Activated T-helper 2 cell treated with anti-CD3 and anti-CD28 coated beads, Interferon-gamma antibody, Interleukin-2, Interleukin-4, amounts not matched to agents 10 μg/mL and 5 μg/mL and 100 μg/mL, durations not matched to agents 14 hours and 24 hours and 36 hours (primary cell): ENCODE measurements at regions of chr1 and their contacts with region 1.

Region 1: DNA sequence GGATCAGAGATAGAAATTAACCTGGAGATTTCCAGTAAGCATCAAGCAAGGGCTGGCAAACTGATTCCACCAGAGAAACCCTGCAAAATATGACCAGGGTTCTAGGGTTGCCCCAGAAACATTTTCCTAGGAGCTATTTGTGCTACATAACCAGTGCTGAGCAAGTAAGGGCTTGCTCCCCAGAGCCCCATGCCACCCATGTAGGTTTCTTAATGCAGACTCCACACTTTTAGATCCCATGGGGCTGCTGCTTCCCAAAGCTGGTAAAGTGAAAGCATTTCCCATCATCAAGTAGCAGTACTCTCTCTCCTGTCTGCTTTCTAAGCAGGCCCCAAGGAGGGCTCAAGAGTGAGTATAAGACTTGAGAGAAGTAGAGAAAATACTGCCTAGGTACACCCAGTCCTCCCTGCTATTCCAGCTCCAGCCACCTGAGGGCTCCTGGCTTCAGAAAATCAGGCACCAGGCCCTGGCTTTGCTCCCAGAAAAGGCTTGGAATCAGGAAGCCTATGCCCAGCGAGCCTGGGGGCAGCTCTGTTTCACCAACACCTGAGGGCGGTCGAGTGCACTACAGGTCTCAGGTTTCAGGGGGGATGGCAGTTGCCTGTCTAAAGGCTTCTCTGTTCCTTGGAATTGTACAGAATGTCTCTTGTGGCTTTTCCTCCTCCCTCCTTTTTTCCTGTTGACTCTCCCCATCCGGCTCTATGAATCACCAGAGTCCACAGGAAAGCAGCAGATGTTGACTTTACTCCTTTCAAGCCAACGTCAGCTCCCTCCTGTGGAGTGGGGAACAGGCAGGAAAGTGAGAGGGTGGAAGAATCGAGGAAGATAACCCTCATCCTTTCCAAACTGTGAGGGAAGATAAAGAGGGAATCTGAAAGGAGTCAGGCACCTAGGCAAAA is 6.2 kb upstream of the ANKRD35 start:
- DNase-seq: peak; percentile 22
- H3K4me3 Mint-ChIP-seq: no peak overlapping the region
- H3K27ac Mint-ChIP-seq: no peak overlapping the region
- H3K4me1 Mint-ChIP-seq: peaks cover under 1% of the 10 kb centered on the region
- H3K27me3 Mint-ChIP-seq: peaks cover 2% of the 10 kb centered on the region

Region 2: DNA sequence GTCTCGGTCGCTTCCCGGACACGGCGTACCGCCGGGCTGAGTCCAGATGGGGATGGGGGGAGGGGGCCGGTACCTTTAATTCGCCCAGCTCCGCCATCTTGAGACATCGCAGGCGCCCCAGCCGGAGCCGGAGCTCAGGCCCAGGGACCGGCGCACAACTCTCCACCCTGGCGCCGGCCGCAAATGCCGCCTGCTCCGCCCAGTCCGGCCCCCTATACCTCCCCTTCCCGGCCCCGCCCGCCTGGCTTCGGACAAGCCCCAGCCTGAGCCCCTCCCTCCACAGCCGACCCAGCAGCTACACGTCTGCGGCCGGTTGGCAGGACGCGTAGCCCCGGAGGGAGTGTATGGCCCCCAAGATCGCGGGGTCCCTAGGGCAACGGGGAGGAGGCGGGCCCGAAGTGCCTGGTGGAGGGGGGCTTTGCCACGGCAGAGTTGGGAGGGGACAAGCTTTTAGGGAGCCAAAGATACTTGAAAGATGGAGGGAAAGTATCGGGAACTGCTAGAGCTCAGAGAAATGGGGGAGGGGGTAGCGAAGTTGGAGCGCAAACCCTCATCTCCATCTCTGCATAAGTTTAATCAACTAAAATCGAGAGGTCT is 32.8 kb before region 1 on chr1 and contains the start of gene PIAS3:
- intact Hi-C with region 1: no loop called
- DNase-seq: peak; percentile 85
- H3K4me3 Mint-ChIP-seq: peak within 1 kb of the TSS; percentile 93
- H3K27ac Mint-ChIP-seq: peak within 1 kb of the TSS; percentile 89
- H3K4me1 Mint-ChIP-seq: peaks cover 11% of the 10 kb centered on the region
- H3K27me3 Mint-ChIP-seq: peaks cover 14% of the 10 kb centered on the region
- total RNA-seq, gene PIAS3: 21.1 and 21.3 TPM in 2 replicates

Region 3: DNA sequence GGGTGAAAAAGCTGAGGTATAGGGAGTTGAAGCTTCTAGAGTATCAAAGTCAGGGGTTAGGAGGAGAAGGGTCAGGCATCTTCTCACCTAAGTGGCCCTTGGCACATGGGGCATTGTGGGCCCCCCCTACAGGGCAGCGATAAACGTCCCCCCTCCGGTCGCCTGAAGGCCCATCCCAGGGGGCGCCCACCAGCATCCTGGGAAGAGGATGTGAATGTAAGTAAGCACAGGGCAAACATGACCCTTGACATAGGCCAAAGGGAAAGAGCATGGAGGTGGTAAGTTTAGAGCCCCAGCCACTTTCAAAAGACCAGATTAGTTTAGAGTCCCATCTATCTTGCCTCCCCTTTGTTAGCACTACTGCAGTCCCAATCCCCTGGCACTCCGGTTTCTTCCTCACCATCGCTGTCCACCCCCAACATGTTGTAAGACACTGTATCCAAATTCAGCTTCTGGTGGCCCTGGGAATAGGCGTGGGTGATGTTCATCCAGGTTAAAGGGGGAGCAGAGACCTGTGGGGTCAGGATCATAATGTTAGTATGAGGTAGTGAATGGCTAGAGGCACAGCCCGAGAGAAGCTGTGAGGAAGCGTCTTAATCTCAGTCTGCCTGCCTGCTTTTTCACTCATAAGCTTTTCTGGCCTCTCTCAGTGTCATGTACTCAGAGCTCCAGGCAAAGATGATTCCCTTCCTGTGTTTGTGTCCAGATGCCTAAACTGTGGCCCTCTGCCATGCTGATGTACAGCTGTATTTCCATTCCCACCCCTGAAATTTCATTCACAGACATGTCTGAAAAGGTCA is 15.3 kb after region 1 on chr1:
- intact Hi-C with region 1: loop called (anchors 1 kb)
- DNase-seq: no peak
- H3K4me3 Mint-ChIP-seq: no peak overlapping the region
- H3K27ac Mint-ChIP-seq: no peak overlapping the region
- H3K4me1 Mint-ChIP-seq: peaks cover 7% of the 10 kb centered on the region
- H3K27me3 Mint-ChIP-seq: no peaks in the 10 kb centered on the region

Region 4: DNA sequence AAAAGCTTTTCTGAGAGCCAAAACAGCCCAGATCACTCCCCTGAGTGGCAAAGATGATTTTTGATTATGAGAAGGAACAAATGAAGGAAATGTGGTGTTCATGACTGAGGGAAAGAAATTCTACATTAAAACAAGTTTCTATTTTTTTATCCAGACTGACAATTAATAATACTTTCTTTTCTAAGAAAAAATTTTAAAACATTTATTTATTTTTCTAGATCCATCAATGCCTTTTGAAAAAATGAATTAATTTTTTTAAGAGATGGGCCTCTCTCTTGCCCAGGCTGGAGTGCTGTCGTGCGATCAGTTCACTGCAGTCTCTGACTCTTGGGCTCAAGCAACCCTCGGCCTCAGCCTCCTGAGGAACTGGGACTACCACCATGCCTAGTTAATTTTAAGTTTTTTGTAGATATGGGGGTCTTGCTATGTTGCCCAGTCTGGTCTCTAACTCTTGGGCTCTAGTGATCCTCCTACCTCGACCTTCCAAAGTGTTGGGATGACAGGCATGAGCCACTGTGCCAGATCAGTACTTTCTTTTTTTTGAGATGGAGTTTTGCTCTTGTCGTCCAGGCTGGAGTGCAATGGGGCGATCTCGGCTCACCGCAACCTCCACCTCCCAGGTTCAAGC is 115.8 kb after region 1 on chr1:
- intact Hi-C with region 1: loop called (anchors 1 kb)
- DNase-seq: no peak
- H3K4me3 Mint-ChIP-seq: no peak overlapping the region
- H3K27ac Mint-ChIP-seq: peak overlapping the region; percentile 88
- H3K4me1 Mint-ChIP-seq: peaks cover 26% of the 10 kb centered on the region
- H3K27me3 Mint-ChIP-seq: no peaks in the 10 kb centered on the region

Region 5: DNA sequence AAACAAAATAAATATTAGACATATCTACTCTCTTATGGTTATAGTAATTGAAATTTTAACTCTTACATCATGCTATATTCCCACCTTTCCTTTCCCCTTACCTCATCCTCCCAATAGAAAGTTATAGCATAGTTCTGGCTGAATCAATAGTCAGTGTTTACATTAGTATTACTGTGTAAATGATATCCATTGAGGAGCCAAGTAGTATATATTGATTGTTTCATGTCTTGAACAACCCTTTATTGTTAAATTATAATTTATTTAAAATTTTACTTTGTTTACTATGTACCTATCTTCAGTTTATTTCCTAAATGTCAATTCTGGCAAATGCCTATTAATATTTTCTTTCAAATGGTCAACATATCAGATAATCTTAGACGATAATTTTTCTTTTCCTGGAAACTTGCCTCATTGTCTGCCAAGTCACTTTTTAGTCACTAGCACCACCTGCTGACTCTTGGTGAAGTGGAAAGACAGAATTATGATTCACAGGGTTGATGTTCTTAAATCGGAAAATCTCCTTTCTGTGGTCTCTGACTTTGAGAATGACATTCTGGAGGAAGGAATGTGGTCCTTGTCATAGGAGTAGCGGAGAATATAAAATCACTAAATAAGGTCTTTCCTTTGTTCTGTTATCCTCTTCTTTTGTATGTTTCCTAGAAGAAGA is 121.0 kb after region 1 on chr1:
- intact Hi-C with region 1: loop called (anchors 2 kb)
- DNase-seq: no peak
- H3K4me3 Mint-ChIP-seq: no peak overlapping the region
- H3K27ac Mint-ChIP-seq: no peak overlapping the region
- H3K4me1 Mint-ChIP-seq: peaks cover 14% of the 10 kb centered on the region
- H3K27me3 Mint-ChIP-seq: peaks cover 24% of the 10 kb centered on the region